K562 (cell line): ENCODE measurements at regions of chr22 and their contacts with region 1.

Region 1: GRCh38 chr22:41746567-41747400 is 47.5 kb downstream of the MEI1 start:
- DNase-seq: peak; percentile 47 to 76 (median 60)
- ATAC-seq: peak; percentile 99
- H3K4me3 ChIP-seq: no peak overlapping the region
- H3K27ac ChIP-seq: no peak overlapping the region
- H3K4me1 ChIP-seq: no peaks in the 10 kb centered on the region; a peak in 1 of 5 replicates
- H3K27me3 ChIP-seq: peaks cover 4 to 9% of the 10 kb centered on the region in 2 experiments; a peak in 1 of 5 replicates
- CTCF ChIP-seq: peak; percentile 77 to 79 (median 78)
- EP300 ChIP-seq: no peak
- POLR2A ChIP-seq: no peak
- RAD21 ChIP-seq: peak; percentile 41 to 73

Region 2: GRCh38 chr22:41697126-41697775 is 49.5 kb before region 1 on chr22:
- CTCF ChIA-PET with region 1: no interaction called
- POLR2A ChIA-PET with region 1: no interaction called
- in situ Hi-C with region 1: no loop called
- intact Hi-C with region 1: loop called (anchors 5 kb)
- DNase-seq: peak; percentile 80 to 87 (median 82)
- ATAC-seq: peak; percentile 95
- H3K4me3 ChIP-seq: no peak overlapping the region
- H3K27ac ChIP-seq: no peak overlapping the region
- H3K4me1 ChIP-seq: peaks cover 2 to 18% of the 10 kb centered on the region in 2 experiments; a peak in 2 of 5 replicates
- H3K27me3 ChIP-seq: no peaks in the 10 kb centered on the region
- CTCF ChIP-seq: peak; percentile 83 to 93 (median 87)
- EP300 ChIP-seq: no peak
- POLR2A ChIP-seq: no peak
- RAD21 ChIP-seq: peak; percentile 76 to 81

Region 3: DNA sequence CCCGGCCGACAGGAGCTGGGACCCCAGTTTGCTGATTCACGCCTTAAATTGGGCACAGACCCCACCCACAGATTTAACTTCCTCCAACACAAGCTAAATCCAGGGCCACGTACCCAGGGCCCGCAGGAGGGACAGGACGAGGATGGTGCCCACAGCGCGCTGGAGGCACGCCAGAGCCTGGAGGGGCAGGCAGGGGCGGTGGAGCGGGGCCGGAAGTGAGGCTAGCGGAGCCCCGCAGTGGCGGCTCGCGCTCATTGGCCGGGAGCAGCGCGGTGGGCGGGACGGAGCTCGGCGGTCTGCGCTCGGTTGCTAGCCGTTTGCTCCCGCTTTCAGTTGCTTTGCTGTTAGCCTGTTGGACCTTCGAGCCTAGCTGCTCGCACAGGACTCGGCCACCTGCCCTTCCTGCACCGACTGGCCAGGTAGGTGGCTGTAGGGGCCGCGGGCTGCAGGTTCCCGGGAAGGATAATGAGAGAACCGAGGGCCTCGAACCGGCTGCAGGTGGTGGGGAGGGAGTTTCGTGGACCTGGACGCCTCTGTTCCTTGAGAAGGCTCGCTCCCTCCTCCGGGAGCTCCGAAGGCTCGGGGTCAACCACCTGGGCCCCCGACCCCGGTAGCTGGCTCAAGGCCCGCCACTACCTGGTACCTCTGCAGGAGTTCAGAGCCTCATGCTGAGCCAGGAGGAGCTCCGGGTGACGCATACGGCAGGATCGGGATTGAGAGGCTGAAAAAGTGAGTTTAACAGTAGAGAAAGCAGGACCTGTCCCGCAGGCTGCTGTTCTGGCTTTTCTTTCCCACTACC is 53.8 kb after region 1 on chr22 and contains the start of gene CCDC134:
- CTCF ChIA-PET with region 1: no interaction called
- POLR2A ChIA-PET with region 1: no interaction called
- in situ Hi-C with region 1: no loop called
- intact Hi-C with region 1: loop called (anchors 2 kb)
- DNase-seq: peak; percentile 87 to 93 (median 92)
- ATAC-seq: peak; percentile 99
- H3K4me3 ChIP-seq: peak within 1 kb of the TSS; percentile 78
- H3K27ac ChIP-seq: peak within 1 kb of the TSS; percentile 77
- H3K4me1 ChIP-seq: peaks cover 13 to 20% of the 10 kb centered on the region in 2 experiments; a peak in 4 of 5 replicates
- H3K27me3 ChIP-seq: no peaks in the 10 kb centered on the region
- CTCF ChIP-seq: no peak
- EP300 ChIP-seq: no peak
- POLR2A ChIP-seq: peak; percentile 86
- RAD21 ChIP-seq: no peak
- polyA plus RNA-seq, gene CCDC134: 0.56 to 0.99 TPM

Region 4: DNA sequence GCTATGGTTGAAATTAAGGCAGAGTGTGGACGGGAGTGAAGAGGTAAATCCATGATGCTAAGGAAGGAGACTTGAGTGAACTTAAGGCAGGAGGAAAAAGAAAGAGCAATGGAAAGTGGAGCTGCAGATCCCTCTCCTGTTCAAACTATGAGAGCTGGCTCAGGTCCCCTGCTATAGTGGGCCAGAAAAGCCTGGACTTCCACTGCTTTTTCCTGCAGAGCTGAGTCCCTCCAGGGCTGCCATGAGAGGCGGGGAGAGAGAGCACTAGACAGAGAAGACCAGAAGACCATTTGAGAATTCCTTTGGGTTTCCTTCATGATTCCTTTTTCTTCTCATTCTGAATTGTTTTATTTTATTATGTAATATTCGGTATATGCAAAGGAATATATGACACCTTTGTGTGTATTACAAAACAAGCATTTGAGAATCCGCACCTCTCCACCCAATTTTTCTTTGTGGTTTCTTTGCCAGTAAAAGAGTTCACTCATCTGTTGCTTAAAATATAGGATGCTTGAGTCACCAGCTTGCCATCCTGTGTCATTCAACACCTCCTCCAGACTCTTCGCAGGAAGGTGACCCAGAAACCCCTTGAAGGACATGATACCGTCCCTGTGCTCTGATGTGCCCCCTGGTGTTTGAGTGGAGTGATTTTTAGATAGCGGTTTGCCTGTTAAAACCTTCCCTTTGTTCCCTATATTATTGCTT is 110.5 kb after region 1 on chr22:
- CTCF ChIA-PET with region 1: no interaction called
- POLR2A ChIA-PET with region 1: no interaction called
- in situ Hi-C with region 1: no loop called
- intact Hi-C with region 1: loop called (anchors 10 kb)
- DNase-seq: peak; percentile 63 to 79 (median 68)
- ATAC-seq: peak; percentile 87
- H3K4me3 ChIP-seq: no peak overlapping the region
- H3K27ac ChIP-seq: peak overlapping the region; percentile 4; the same call in 1 of the 3 replicates
- H3K4me1 ChIP-seq: peaks cover 8 to 12% of the 10 kb centered on the region in 2 experiments; a peak in 3 of 5 replicates
- H3K27me3 ChIP-seq: no peaks in the 10 kb centered on the region
- CTCF ChIP-seq: peak; percentile 57 to 61 (median 58)
- EP300 ChIP-seq: no peak
- POLR2A ChIP-seq: no peak
- RAD21 ChIP-seq: peak; percentile 44 to 72; a peak in 3 of 4 replicates